ENCODE measurements at regions of chr2 and their contacts with region 1.

Region 1: GRCh38 chr2:18404708-18405107 is 155.7 kb downstream of the RDH14 start:
- DNase-seq: no peak
- ATAC-seq: no peak
- H3K4me3 Mint-ChIP-seq: no peak overlapping the region
- H3K27ac Mint-ChIP-seq: no peak overlapping the region
- H3K4me1 Mint-ChIP-seq: no peaks in the 10 kb centered on the region
- H3K27me3 Mint-ChIP-seq: peaks cover 10% of the 10 kb centered on the region
- CTCF ChIP-seq: peak; percentile 59

Region 2: GRCh38 chr2:18311420-18312195 is 93.1 kb before region 1 on chr2:
- CTCF ChIA-PET with region 1: no interaction called
- POLR2A ChIA-PET with region 1: no interaction called
- intact Hi-C with region 1: no loop called
- DNase-seq: no peak
- ATAC-seq: no peak
- H3K4me3 Mint-ChIP-seq: no peak overlapping the region
- H3K27ac Mint-ChIP-seq: no peak overlapping the region
- H3K4me1 Mint-ChIP-seq: no peaks in the 10 kb centered on the region
- H3K27me3 Mint-ChIP-seq: no peaks in the 10 kb centered on the region
- CTCF ChIP-seq: no peak

Region 3: GRCh38 chr2:18387441-18388206 is 17.1 kb before region 1 on chr2:
- CTCF ChIA-PET with region 1: interaction called, 11 read pairs
- POLR2A ChIA-PET with region 1: no interaction called
- intact Hi-C with region 1: no loop called
- DNase-seq: peak; percentile 76
- ATAC-seq: peak; percentile 80
- H3K4me3 Mint-ChIP-seq: no peak overlapping the region
- H3K27ac Mint-ChIP-seq: no peak overlapping the region
- H3K4me1 Mint-ChIP-seq: no peaks in the 10 kb centered on the region
- H3K27me3 Mint-ChIP-seq: peaks cover 2% of the 10 kb centered on the region
- CTCF ChIP-seq: peak; percentile 90

Measured in activated CD8-positive, alpha-beta T cell treated with anti-CD3 and anti-CD28 coated beads for 36 hours (primary cell).